ENCODE measurements at regions of chr1 and their contacts with region 1.

Region 1: DNA sequence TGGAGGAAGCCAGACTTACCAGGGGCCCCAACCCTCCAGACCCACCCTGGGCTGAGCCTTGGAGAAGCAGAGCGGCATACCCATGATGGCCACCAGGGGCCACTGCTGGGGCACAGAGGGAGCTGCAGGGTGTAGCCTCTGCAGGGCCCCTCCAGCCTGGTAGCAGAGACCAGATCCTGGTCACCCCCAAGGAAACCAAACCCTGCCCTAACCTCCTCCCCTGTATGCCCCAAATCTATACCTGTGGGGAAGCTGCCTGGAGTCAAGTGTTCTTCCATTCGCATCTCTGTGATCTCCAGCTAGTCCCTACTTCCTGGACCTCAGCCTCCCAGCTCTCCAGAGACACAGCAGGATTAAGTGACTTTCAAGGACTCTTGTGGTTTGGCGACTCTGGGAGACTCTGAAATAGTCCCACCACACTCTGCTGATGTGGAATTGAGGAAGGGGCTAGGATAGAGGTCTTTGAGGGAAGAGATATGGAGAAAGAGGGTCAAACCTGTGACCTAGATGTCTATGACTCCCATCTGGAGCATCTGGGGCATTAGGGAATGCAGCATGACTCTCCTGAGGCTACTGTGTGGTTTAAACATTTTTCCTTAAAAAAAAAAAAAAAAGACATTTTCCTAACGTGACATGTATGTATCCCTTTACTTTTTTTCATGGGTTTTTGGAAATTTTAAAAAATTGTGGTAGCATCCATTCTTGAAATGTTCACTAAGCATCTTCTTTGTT is 119.2 kb upstream of the IPO9 start:
- DNase-seq: peak; percentile 54 to 82
- ATAC-seq: peak; percentile 62 to 80; a peak in 4 of 6 replicates
- H3K4me3 ChIP-seq: no peak overlapping the region
- H3K27ac ChIP-seq: peak overlapping the region; percentile 59 to 95
- H3K4me1 ChIP-seq: peaks cover 43% of the 10 kb centered on the region
- CTCF ChIP-seq: peak; percentile 92
- EP300 ChIP-seq: no peak
- POLR2A ChIP-seq: no peak
- RAD21 ChIP-seq: peak; percentile 95 to 97

Region 2: DNA sequence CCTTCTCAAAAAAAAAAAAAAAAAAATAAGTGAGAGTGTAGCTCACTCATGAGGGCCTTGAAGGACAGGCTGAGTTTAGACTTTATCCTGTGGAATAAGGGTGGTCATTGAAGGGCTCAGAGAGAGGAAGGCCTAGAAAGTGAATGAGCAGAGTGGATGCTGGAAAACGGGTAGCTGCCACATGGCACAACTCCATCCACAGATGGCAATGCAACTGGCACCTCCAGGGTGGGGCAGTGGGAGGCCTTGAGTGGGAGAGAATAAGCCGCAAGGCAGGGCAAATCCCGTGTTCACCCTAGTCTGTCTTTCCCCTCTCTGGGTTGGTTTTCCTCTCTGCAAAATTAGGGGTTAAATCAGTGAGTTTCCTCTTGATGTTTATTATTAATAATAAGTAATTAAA is 291.3 kb before region 1 on chr1:
- CTCF ChIA-PET with region 1: no interaction called
- POLR2A ChIA-PET with region 1: no interaction called
- DNase-seq: no peak
- ATAC-seq: no peak
- H3K4me3 ChIP-seq: no peak overlapping the region
- H3K27ac ChIP-seq: no peak overlapping the region
- H3K4me1 ChIP-seq: no peaks in the 10 kb centered on the region
- CTCF ChIP-seq: no peak
- EP300 ChIP-seq: no peak
- POLR2A ChIP-seq: no peak
- RAD21 ChIP-seq: no peak

Region 3: GRCh38 chr1:201530741-201531531 is 178.8 kb before region 1 on chr1:
- CTCF ChIA-PET with region 1: interaction called, 125 read pairs
- POLR2A ChIA-PET with region 1: no interaction called
- DNase-seq: peak; percentile 75 to 89
- ATAC-seq: peak; percentile 89 to 94
- H3K4me3 ChIP-seq: no peak overlapping the region
- H3K27ac ChIP-seq: peak overlapping the region in 1 of 2 experiments; percentile 52; a peak in 2 of 6 replicates
- H3K4me1 ChIP-seq: peaks cover 21% of the 10 kb centered on the region
- CTCF ChIP-seq: peak; percentile 90
- EP300 ChIP-seq: no peak
- POLR2A ChIP-seq: no peak
- RAD21 ChIP-seq: peak; percentile 93 to 96

Region 4: DNA sequence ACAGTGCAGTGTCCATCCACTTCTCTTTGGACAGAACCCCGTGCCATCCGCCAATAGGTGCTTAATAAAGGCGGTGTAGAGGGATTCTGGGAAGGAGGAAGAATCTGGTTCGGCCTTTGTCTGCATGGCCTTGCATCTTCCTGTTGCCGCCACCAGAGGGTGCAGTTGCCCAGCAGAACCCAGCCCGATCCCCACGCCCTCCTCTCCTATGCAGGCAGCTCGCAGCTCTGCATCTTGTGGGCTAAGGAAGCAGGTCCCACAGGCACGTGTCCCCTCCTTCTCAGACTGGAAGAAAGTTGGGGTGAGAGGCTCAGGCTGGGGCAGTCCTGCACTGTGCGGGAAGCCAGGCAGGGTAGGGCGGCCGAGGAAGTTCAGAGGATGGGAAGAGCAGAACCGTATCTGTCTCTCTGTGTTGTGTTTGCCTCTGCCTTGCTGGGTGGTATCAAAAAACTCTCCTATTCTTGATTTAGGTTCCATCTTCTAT is 150.0 kb before region 1 on chr1:
- CTCF ChIA-PET with region 1: interaction called, 437 read pairs
- POLR2A ChIA-PET with region 1: interaction called, 3 read pairs
- DNase-seq: peak; percentile 85 to 92
- ATAC-seq: peak; percentile 88 to 96
- H3K4me3 ChIP-seq: no peak overlapping the region
- H3K27ac ChIP-seq: peak overlapping the region; percentile 60 to 80
- H3K4me1 ChIP-seq: peaks cover 37% of the 10 kb centered on the region
- CTCF ChIP-seq: peak; percentile 95
- EP300 ChIP-seq: no peak
- POLR2A ChIP-seq: no peak
- RAD21 ChIP-seq: peak; percentile 99 to 100

Region 5: DNA sequence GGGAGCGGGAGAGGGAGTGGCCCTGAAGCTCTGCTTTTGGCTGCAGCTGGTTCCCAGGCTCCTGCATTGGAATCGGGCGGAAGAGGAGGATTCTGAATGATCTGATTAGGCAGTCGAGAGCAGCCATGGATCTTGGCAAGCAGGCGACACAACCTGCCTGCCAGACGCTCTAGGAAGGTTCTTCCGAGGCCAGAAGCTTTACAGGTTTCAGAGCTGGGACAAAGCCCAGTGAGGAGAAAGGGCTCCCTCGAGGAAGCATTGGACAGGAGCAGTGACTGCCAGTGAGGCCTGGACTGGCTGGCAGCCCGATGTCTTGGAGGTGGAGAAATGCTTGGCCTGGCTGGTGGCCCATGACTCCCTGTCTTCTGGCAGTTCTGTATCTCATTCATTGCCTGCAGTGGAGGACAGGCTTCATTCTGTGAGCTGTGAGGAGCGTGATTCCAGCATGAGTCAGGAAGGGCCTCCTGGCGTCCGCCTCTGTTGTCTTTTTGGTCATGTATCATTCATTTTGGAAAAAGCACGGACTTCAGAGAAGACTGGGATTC is 13.4 kb before region 1 on chr1:
- CTCF ChIA-PET with region 1: interaction called, 34 read pairs
- POLR2A ChIA-PET with region 1: no interaction called
- DNase-seq: no peak
- ATAC-seq: peak; percentile 74 to 83
- H3K4me3 ChIP-seq: no peak overlapping the region
- H3K27ac ChIP-seq: peak overlapping the region; percentile 45 to 74; a peak in 5 of 6 replicates
- H3K4me1 ChIP-seq: peaks cover 18% of the 10 kb centered on the region
- CTCF ChIP-seq: no peak
- EP300 ChIP-seq: no peak
- POLR2A ChIP-seq: no peak
- RAD21 ChIP-seq: no peak

Region 6: DNA sequence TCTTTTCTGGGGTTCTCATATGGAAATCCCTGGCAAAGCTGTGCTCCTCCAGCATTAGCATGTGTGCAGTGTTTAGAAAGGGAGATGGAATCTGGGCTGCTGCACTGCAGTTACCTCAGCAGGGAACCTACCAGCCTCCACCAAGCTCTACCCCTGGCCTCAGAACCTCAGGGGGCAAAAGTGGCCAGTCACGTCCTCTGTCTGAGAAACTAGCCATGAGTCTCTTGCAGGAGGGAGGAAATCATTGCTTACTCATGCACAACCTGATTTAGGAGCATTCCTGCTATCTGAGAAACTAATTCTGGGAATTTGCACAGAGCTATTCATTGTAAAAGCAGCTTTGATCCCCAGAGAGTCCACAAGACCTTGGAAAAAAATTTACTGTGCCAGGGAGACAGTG is 38.6 kb after region 1 on chr1:
- CTCF ChIA-PET with region 1: interaction called, 11 read pairs
- POLR2A ChIA-PET with region 1: interaction called, 6 read pairs
- DNase-seq: peak in 1 of 2 experiments; percentile 43
- ATAC-seq: peak; percentile 44 to 82; a peak in 3 of 6 replicates
- H3K4me3 ChIP-seq: no peak overlapping the region
- H3K27ac ChIP-seq: peak overlapping the region; percentile 25 to 76; a peak in 4 of 6 replicates
- H3K4me1 ChIP-seq: peaks cover 61% of the 10 kb centered on the region
- CTCF ChIP-seq: no peak
- EP300 ChIP-seq: no peak; a peak in 1 of 5 replicates
- POLR2A ChIP-seq: no peak
- RAD21 ChIP-seq: no peak

Region 7: DNA sequence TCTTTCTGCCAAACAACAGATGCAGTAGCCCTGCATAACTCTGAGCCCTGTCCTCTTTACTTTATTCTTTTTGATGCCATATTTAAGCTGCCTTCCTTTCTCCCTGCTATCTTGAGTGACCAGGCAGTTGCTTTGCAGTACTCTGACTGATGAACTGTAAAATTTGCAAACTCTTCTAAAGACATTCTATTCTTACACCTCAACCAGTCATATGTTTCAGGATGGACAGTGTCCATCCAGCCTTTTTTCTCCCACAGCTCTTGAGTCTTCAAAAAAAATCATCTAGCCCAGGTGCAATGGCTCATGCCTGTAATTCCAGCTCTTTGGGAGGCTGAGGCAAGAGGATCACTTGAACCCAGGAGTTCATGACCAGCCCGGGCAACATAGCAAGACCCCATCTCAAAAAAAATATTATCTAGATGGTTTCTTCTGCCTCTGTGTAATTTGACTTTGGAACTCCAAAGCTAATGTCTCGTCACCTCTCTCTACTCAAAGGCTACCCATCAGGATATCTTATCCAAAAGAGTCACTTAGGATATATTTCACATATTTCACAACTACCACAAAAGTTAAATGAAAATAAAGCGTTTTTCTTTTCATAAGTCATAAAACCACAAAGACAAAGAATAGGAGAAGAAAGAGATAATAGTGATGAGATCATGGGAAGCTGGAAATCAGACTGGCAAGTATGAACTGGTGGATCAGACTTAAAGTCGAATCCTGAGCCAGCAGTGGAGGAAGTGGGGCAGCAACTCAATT is 64.7 kb after region 1 on chr1:
- CTCF ChIA-PET with region 1: interaction called, 903 read pairs
- POLR2A ChIA-PET with region 1: no interaction called
- DNase-seq: no peak
- ATAC-seq: no peak
- H3K4me3 ChIP-seq: no peak overlapping the region
- H3K27ac ChIP-seq: no peak overlapping the region
- H3K4me1 ChIP-seq: peaks cover 6% of the 10 kb centered on the region; the same call in 1 of the 3 replicates
- CTCF ChIP-seq: no peak
- EP300 ChIP-seq: no peak
- POLR2A ChIP-seq: no peak
- RAD21 ChIP-seq: no peak

Region 8: GRCh38 chr1:201828820-201829774 is 119.4 kb after region 1 on chr1 and contains the start of gene IPO9:
- CTCF ChIA-PET with region 1: interaction called, 12 read pairs
- POLR2A ChIA-PET with region 1: no interaction called
- DNase-seq: peak; percentile 94 to 96
- ATAC-seq: peak; percentile 93 to 96
- H3K4me3 ChIP-seq: peak within 1 kb of the TSS; percentile 95
- H3K27ac ChIP-seq: peak within 1 kb of the TSS; percentile 96 to 99
- H3K4me1 ChIP-seq: peaks cover 20% of the 10 kb centered on the region
- CTCF ChIP-seq: peak; percentile 89
- EP300 ChIP-seq: no peak
- POLR2A ChIP-seq: peak; percentile 80
- RAD21 ChIP-seq: peak in 1 of 2 experiments; percentile 20; a peak in 1 of 5 replicates
- polyA plus RNA-seq, gene IPO9: 72.3 and 77.5 TPM in 2 replicates

Measured in A549 (cell line).